Transverse colon (tissue), 4 donors: ENCODE measurements at regions of chr10 and their contacts with region 1.

Region 1: GRCh38 chr10:78335691-78336401 is 302.2 kb downstream of the RPS24 start:
- DNase-seq: no peak
- H3K4me3 ChIP-seq: no peak overlapping the region
- H3K27ac ChIP-seq: peak overlapping the region; percentile 16 to 63 (median 28)
- H3K4me1 ChIP-seq: peaks cover 0 to 22% (median 4%) of the 10 kb centered on the region in 4 donors
- H3K27me3 ChIP-seq: no peaks in the 10 kb centered on the region
- CTCF ChIP-seq: no peak
- EP300 ChIP-seq: no peak
- POLR2A ChIP-seq: no peak

Region 2: GRCh38 chr10:78470267-78471103 is 134.6 kb after region 1 on chr10:
- in situ Hi-C with region 1: no loop called
- intact Hi-C with region 1: loop called (anchors 10 kb)
- DNase-seq: no peak
- H3K4me3 ChIP-seq: no peak overlapping the region
- H3K27ac ChIP-seq: peak overlapping the region in 3 of 4 donors; percentile 69 to 79 (median 71)
- H3K4me1 ChIP-seq: peaks cover 0 to 5% (median 2%) of the 10 kb centered on the region in 4 donors
- H3K27me3 ChIP-seq: no peaks in the 10 kb centered on the region
- CTCF ChIP-seq: no peak
- EP300 ChIP-seq: no peak
- POLR2A ChIP-seq: no peak